MCF 10A (cell line): ENCODE measurements at regions of chr2 and their contacts with region 1.

Region 1: DNA sequence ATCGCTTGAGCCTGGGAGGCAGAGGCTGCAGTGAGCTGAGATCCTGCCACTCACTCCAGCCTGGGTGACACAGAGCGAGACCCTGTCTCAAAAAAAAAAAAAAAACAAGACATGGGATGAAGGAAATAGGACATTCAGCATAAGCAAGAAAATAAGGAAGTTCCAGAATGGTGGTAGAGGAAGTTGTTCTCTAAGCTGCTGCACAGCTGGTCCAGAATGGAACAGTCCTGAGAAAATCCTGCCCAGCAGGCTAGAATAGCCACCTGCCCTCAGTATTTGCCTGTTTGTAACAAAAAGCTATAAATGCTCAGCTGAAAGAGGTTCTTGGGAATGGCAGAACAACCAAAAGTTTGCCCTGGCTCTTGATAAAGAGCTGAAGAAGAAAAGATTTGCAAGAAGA is 11.1 kb upstream of the MAPRE3 start:
- DNase-seq: no peak
- H3K4me3 Mint-ChIP-seq: no peak overlapping the region
- H3K27ac Mint-ChIP-seq: no peak overlapping the region
- H3K4me1 Mint-ChIP-seq: no peaks in the 10 kb centered on the region
- H3K27me3 Mint-ChIP-seq: peaks cover 74% of the 10 kb centered on the region
- CTCF ChIP-seq: no peak

Region 2: DNA sequence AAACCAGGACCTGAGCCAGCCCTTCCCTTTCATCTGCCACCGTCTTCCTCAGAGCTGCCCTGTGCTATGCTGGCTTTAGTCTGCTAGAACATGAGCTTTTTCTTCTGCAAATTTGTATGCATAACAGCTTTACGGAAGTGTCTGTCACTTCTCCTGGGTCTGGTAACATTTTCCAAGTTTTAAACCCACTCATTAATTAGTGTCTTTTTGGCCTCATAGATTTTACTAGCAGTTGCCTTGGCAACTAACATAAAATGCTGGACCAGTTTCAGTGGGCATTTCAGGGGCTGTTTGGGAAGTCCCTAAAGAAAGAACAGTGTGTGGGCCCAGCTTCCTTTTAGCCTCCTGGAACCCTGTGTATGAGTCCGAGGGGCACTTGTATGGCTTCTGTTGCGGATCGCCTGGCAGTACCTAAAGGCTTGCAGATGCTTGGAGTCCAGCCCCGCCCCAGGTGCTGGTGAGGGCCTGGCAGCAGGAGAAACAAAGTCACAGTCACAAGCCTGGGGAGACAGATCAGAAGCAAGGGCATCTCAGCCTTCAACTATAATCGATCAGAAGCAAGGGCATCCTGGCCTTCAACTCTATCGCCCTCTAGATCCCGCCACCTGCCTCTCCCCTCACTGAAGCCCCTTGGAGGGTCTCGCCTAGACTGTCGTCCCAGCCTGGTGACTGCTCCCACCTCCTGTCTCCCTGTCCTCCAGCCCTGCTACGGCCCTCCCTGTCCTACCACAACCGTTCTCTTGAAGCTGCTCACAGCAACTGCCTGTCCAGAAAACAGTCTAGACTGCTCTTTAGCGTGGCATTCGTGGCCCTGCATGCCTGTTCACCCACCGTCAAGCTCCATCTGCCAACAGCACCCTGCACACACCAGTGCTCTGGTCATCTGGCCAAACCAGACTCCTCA is 25.6 kb before region 1 on chr2:
- CTCF ChIA-PET with region 1: no interaction called
- POLR2A ChIA-PET with region 1: no interaction called
- intact Hi-C with region 1: no loop called
- DNase-seq: no peak
- H3K4me3 Mint-ChIP-seq: no peak overlapping the region
- H3K27ac Mint-ChIP-seq: no peak overlapping the region
- H3K4me1 Mint-ChIP-seq: no peaks in the 10 kb centered on the region
- H3K27me3 Mint-ChIP-seq: peaks cover 45% of the 10 kb centered on the region
- CTCF ChIP-seq: no peak

Region 3: GRCh38 chr2:27024812-27025211 is 65.5 kb after region 1 on chr2:
- CTCF ChIA-PET with region 1: interaction called, 371 read pairs
- POLR2A ChIA-PET with region 1: no interaction called
- intact Hi-C with region 1: no loop called
- DNase-seq: no peak
- H3K4me3 Mint-ChIP-seq: no peak overlapping the region
- H3K27ac Mint-ChIP-seq: no peak overlapping the region
- H3K4me1 Mint-ChIP-seq: peaks cover 13% of the 10 kb centered on the region
- H3K27me3 Mint-ChIP-seq: no peaks in the 10 kb centered on the region
- CTCF ChIP-seq: no peak

Region 4: GRCh38 chr2:27086090-27086723 is 126.9 kb after region 1 on chr2:
- CTCF ChIA-PET with region 1: interaction called, 8 read pairs
- POLR2A ChIA-PET with region 1: no interaction called
- intact Hi-C with region 1: loop called (anchors 1 kb)
- DNase-seq: peak; percentile 92
- H3K4me3 Mint-ChIP-seq: peak overlapping the region; percentile 75
- H3K27ac Mint-ChIP-seq: no peak overlapping the region
- H3K4me1 Mint-ChIP-seq: peaks cover 5% of the 10 kb centered on the region
- H3K27me3 Mint-ChIP-seq: no peaks in the 10 kb centered on the region
- CTCF ChIP-seq: peak; percentile 87

Region 5: DNA sequence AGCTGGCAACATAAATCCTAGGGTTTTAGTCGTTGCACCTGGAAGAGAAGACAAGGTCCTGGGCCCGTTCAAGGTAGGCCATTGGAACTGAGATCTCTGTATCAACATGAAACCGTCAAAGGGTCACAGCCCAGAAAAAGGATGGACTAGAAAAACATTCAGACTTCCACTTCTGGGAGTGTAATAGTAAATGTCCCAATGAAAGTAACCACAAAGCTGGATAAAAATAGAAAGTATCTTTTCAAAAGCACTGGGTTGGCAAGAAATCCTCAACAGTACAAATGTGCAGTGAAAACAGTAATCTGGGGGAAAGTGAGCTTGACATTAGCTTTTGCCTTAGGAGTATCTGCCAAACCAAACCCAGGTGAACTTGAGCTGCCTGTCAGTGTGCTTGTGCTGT is 146.7 kb after region 1 on chr2:
- CTCF ChIA-PET with region 1: no interaction called
- POLR2A ChIA-PET with region 1: no interaction called
- intact Hi-C with region 1: no loop called
- DNase-seq: no peak
- H3K4me3 Mint-ChIP-seq: no peak overlapping the region
- H3K27ac Mint-ChIP-seq: no peak overlapping the region
- H3K4me1 Mint-ChIP-seq: no peaks in the 10 kb centered on the region
- H3K27me3 Mint-ChIP-seq: no peaks in the 10 kb centered on the region
- CTCF ChIP-seq: no peak

Region 6: GRCh38 chr2:27520316-27520715 is 561.0 kb after region 1 on chr2:
- CTCF ChIA-PET with region 1: no interaction called
- POLR2A ChIA-PET with region 1: no interaction called
- intact Hi-C with region 1: no loop called
- DNase-seq: no peak
- H3K4me3 Mint-ChIP-seq: no peak overlapping the region
- H3K27ac Mint-ChIP-seq: no peak overlapping the region
- H3K4me1 Mint-ChIP-seq: no peaks in the 10 kb centered on the region
- H3K27me3 Mint-ChIP-seq: no peaks in the 10 kb centered on the region
- CTCF ChIP-seq: no peak